ENCODE measurements at regions of chr1 and their contacts with region 1.

Region 1: GRCh38 chr1:40197656-40198055 is 36.5 kb downstream of the RLF start:
- H3K4me3 ChIP-seq: no peak overlapping the region
- H3K27ac ChIP-seq: no peak overlapping the region
- H3K4me1 ChIP-seq: no peaks in the 10 kb centered on the region
- CTCF ChIP-seq: no peak

Region 2: GRCh38 chr1:40040511-40041465 is 156.9 kb before region 1 on chr1 and contains the start of gene CAP1:
- CTCF ChIA-PET with region 1: no interaction called
- POLR2A ChIA-PET with region 1: no interaction called
- H3K4me3 ChIP-seq: peak within 1 kb of the TSS; percentile 95
- H3K27ac ChIP-seq: peak within 1 kb of the TSS; percentile 86
- H3K4me1 ChIP-seq: no peaks in the 10 kb centered on the region
- CTCF ChIP-seq: peak; percentile 37

Region 3: DNA sequence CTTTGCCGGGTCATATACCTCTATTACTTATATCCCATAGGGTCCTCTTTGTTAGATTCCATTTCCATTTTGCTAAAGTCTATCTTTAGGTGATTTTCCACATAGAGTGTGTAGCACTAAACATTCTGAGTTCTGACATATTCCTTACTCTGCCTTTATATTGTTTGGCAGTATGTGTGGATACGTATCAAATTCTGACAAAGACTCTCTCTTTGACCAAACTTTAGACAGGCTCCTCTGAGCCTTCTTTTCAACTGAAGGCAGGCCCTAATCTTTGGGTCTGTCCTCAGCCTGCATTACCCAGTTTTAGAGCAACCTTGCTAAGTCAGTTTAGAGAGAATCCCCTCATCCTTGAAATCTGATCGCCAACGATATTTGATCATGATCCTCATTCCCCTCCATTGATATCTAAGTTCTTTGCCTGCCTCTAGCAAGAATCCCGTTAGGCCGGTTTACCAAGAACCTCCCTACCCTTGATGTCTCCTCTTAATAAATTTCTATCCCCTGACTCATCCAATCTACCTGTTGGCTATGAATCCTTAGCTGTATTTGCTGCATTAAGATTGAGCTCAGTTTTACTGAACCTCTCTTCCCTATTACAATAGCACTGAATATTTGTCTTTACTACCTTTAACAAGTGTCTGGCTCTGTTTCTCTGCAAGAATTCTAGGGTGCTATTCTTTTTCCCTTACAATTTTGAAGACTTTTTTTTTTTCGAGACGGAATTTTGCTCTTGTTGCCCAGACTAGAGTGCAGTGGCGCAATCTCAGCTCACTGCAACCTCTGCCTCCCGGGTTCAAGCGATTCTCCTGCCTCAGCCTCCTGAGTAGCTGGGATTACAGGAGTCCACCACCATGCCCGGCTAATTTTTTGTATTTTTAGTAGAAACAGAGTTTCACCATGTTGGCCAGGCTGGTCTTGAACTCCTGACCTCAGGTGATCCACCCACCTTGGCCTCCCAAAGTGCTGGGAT is 90.1 kb before region 1 on chr1:
- CTCF ChIA-PET with region 1: no interaction called
- POLR2A ChIA-PET with region 1: no interaction called
- H3K4me3 ChIP-seq: no peak overlapping the region
- H3K27ac ChIP-seq: no peak overlapping the region
- H3K4me1 ChIP-seq: no peaks in the 10 kb centered on the region
- CTCF ChIP-seq: no peak

Region 4: DNA sequence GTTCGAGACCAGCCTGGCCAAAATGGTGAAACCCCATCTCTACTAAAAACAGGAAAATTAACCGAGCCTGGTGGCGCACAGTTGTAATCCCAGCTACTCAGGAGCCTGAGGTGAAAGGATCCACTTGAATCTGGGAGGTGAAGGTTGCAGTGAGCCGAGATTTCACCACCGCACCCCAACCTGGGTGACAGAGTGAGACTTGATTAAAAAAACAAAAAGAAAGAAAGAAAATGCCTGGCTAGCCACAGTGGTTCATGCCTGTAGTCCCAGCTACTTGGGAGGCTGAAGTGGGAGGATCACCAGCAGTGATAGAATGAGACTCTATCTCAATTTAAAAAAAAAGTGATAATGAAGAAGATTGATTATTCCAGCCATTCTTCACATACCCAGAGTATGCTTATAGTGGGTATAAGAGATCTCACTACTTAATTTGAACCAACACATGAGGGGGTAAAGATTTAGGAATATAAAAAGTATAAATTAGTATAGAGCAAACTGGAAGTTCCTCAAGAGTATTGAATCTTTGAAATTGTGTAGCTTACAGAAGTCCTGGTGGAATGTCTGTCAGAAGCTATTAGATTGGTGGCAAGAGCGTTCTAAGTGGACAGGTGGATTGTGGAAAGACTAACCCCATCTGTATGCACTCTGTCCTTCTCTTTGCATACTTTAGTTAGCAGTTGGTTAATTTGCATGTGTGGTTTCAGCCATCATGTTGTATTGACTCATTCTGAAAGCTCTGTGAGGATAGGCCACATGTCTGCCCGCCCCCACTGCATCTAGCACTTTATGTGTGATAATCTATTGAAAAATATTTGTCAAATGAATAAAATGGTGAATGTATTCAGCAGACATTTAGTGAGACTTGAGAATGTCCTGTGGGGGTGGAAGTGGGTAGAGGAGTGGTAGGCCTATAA is 11.4 kb before region 1 on chr1:
- CTCF ChIA-PET with region 1: interaction called, 12 read pairs
- POLR2A ChIA-PET with region 1: no interaction called
- H3K4me3 ChIP-seq: no peak overlapping the region
- H3K27ac ChIP-seq: no peak overlapping the region
- H3K4me1 ChIP-seq: no peaks in the 10 kb centered on the region
- CTCF ChIP-seq: no peak